ENCODE measurements at regions of chr17 and their contacts with region 1.

Region 1: GRCh38 chr17:17900615-17901520 is 64.1 kb upstream of the SREBF1 start:
- DNase-seq: no peak
- H3K4me3 ChIP-seq: no peak overlapping the region
- H3K27ac ChIP-seq: no peak overlapping the region
- H3K4me1 ChIP-seq: peaks cover 0 to 3% (median under 1%) of the 10 kb centered on the region in 4 experiments; a peak in 2 of 7 replicates
- H3K27me3 ChIP-seq: no peaks in the 10 kb centered on the region
- CTCF ChIP-seq: no peak
- EP300 ChIP-seq: no peak
- POLR2A ChIP-seq: no peak
- RAD21 ChIP-seq: no peak

Region 2: DNA sequence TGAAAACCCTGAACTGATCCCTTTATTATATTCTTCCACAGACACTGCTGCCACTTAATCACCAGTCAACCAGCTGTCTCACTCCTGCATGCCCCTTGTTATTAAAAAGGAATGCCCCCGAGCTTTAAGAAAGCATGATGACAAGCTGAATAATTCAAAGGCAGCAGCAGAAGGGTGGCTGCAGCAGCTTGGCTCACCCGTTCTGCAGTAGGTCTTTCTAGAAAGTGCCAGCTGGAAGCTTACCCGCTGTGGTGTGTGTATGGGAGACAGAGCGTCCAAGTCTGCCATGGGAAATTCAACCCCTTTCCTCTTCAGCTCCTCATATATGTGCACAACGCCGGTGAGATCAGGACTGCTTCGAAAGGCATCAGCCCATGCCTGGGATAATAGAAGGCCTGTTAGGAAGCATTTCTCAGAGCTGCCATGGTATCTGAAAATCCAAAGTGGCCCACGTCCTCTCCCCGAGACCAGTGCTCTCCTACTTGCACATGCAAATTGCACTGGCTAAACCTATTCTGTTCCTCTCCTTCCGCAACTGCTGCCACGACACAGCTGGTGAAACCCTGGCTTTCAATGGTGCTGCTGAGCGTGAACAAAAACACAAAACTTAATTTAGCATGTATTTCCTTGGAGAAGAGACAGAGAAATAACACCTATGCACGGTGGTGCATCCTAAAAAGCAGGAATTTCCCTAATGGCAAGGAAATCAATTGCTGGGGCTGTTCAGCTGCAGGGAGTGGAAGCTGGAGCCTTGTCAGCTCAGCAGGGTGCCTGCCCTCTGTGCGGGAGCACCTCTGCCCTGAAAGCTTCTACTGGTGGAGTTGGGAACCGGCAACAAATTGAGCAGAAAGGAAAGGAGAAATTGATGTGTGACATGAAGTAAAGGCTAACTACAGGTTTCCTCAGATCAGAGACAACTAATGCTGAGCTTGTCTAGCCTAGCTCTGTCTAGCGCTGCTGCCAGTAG is 16.2 kb before region 1 on chr17:
- CTCF ChIA-PET with region 1: interaction called, 43 read pairs
- POLR2A ChIA-PET with region 1: no interaction called
- DNase-seq: no peak
- H3K4me3 ChIP-seq: no peak overlapping the region
- H3K27ac ChIP-seq: no peak overlapping the region
- H3K4me1 ChIP-seq: peaks cover 20 to 32% (median 25%) of the 10 kb centered on the region in 4 experiments
- H3K27me3 ChIP-seq: no peaks in the 10 kb centered on the region
- CTCF ChIP-seq: no peak
- EP300 ChIP-seq: no peak
- POLR2A ChIP-seq: no peak
- RAD21 ChIP-seq: no peak

Region 3: GRCh38 chr17:17950806-17951205 is 49.9 kb after region 1 on chr17:
- CTCF ChIA-PET with region 1: no interaction called
- POLR2A ChIA-PET with region 1: no interaction called
- DNase-seq: no peak
- H3K4me3 ChIP-seq: no peak overlapping the region
- H3K27ac ChIP-seq: no peak overlapping the region
- H3K4me1 ChIP-seq: peaks cover 0 to 8% (median under 1%) of the 10 kb centered on the region in 4 experiments; a peak in 1 of 7 replicates
- H3K27me3 ChIP-seq: no peaks in the 10 kb centered on the region
- CTCF ChIP-seq: peak; percentile 61 to 72 (median 61)
- EP300 ChIP-seq: no peak
- POLR2A ChIP-seq: no peak
- RAD21 ChIP-seq: peak; percentile 9 to 47; a peak in 1 of 4 replicates

Measured in H1 (cell line).